ENCODE measurements at regions of chr21 and their contacts with region 1.

Region 1: DNA sequence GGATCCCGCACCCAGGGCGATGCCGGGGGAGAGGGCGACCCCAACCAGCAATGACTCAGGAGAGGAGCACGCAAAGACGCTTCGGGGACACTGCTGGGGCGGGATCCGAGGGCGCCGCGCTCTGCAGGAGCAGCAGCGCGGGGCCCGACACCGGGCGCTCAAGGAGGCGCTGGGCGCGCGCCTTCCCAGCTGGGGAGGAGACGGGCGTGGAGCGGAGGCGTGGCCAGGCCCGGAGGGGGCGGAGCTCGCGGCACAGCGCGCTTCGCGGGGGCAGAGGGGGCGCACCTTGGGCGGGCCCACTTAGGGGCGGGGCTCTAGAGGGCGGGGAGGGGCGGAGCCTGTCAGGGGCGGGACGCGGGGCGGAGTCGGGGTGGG is 369 bp downstream of the SUMO3 start:
- DNase-seq: peak; percentile 88
- ATAC-seq: peak; percentile 98
- H3K4me3 ChIP-seq: peak overlapping the region; percentile 99
- H3K27ac ChIP-seq: peak overlapping the region; percentile 75; the same call in 1 of the 2 replicates
- H3K4me1 ChIP-seq: peaks cover 8% of the 10 kb centered on the region; the same call in 1 of the 2 replicates
- H3K27me3 ChIP-seq: no peaks in the 10 kb centered on the region
- CTCF ChIP-seq: no peak
- POLR2A ChIP-seq: no peak
- RAD21 ChIP-seq: no peak

Region 2: DNA sequence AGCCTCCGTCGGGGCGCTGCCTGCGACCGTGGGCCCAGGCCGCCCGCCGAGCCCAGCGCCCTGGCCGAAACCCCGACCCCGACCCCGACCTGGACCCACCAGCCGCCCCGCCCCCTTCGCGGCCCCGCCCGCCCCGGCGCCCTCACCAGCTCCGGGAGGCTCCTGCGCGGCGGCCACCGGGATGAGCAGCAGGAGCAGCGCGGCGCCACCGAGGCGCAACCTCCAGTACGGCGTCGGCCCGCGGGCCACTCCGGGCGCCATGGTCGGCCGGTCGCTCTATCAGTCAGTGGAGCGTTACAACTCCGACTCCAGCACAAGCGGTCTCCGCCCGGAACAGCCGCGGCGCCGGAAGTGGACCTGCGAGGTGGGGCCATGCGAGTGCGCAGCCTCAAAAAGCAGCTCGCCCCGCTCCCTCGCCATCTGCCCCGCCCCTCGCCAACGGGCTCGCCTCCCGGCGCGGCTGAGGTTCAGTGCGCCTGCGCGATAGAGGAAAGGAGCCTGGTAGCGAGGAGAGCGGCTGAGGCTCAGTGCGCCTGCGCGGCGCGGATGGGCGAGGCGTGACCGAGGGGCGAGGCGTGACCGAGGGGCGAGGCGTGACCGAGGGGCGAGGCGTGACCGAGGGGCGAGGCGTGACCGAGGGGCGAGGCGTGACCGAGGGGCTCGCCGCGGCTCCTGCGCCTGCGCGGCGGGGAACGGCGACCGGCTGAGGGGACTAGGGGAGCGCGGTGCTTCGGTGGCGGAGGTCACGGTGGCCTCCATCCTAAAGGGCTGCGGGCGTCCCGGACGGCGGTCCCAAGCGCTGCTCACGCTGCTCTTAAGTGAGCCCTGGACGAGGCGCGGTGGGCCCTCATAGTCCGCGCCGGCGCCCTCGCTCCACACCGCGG is 56.1 kb after region 1 on chr21 and contains the start of gene PTTG1IP:
- CTCF ChIA-PET with region 1: no interaction called
- POLR2A ChIA-PET with region 1: no interaction called
- dilution Hi-C with region 1: no loop called
- in situ Hi-C with region 1: no loop called
- intact Hi-C with region 1: loop called (anchors 5 kb)
- DNase-seq: peak; percentile 94
- ATAC-seq: peak; percentile 81
- H3K4me3 ChIP-seq: peak within 1 kb of the TSS; percentile 90
- H3K27ac ChIP-seq: peak within 1 kb of the TSS; percentile 85
- H3K4me1 ChIP-seq: peaks cover 17% of the 10 kb centered on the region
- H3K27me3 ChIP-seq: no peaks in the 10 kb centered on the region
- CTCF ChIP-seq: no peak
- POLR2A ChIP-seq: peak; percentile 83
- RAD21 ChIP-seq: no peak
- total RNA-seq, gene PTTG1IP: 194 and 230 TPM in 2 replicates

Region 3: DNA sequence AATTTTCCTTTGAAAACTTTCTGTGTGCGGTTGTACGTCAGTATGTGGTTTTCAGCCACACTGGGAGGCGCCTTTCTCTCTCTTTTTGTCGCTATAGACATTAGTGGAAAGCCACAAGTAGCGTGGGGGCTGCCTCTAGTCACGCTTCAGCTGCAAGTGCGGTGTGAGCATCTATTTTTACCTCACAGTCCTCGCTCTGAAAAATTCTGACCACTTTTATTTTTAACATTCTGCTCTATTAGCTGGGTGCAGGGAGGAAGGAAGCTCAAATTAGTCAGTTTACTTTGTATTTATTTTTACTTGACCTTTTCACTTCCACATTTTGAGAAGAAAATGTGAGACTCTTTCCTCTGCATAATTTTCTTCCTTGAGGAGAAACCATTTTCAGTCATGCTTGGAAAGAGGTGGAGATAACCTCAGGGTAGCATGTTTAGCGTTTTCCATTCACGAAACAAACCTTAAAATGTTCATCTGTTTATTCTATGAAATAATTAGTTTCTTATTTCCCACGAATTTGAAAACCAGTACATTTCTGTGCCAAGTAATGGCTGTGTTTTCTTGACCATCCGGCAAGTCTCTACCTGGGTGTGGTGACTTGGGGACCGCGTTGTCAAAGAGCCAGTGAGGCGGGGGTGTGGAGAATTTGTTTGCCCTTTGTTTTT is 292.5 kb after region 1 on chr21:
- CTCF ChIA-PET with region 1: no interaction called
- POLR2A ChIA-PET with region 1: no interaction called
- dilution Hi-C with region 1: no loop called
- in situ Hi-C with region 1: loop called (anchors 25 kb)
- intact Hi-C with region 1: no loop called
- DNase-seq: no peak
- ATAC-seq: no peak
- H3K4me3 ChIP-seq: no peak overlapping the region
- H3K27ac ChIP-seq: no peak overlapping the region
- H3K4me1 ChIP-seq: peaks cover 20% of the 10 kb centered on the region
- H3K27me3 ChIP-seq: no peaks in the 10 kb centered on the region
- CTCF ChIP-seq: no peak
- POLR2A ChIP-seq: no peak
- RAD21 ChIP-seq: no peak

Region 4: DNA sequence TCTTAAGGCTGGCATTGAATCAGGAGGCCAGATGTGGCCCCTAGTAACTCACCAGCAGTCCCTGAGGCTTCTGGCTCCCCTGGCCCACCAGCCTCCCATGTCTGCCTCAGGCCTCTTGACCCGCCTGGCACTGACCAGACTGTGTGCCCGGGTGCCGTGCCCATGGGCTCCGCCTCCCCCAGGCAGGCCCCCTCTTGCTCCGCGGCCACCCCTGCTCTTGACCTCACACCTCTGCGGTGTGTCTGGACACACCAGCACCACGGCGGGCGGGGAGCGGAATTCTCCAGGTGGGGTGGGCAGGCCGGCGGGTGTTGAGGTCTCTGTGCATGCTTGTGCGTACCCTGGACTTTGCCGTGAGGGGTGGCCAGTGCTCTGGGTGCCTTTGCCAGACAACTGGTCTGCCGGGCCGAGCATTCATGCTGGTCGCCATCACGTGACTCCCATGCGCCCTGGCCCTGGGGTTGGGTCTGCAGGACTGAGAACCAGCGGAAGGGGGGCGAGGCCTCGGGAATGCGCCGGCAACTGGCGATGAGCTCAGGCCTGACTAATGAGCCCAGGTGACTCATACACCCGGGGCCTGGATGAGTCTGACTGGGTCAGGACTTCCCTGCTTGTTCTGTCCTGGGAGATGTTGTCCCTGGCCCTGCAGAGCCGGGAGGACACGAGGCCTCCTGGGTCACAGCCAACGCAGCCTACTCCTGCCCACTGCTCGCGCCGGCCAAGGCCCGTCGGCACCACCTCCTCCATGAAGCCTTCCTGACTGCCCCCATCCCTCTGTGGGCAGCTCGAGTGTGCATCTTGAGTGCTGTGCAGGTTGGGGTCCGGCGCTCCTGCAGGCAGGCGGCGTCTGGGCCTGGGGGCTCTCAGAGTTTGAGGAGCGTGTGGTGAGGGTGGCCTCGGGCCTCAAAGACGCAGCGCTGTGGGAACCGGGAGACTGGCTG is 610.1 kb after region 1 on chr21:
- CTCF ChIA-PET with region 1: interaction called, 10 read pairs
- POLR2A ChIA-PET with region 1: no interaction called
- dilution Hi-C with region 1: no loop called
- in situ Hi-C with region 1: no loop called
- intact Hi-C with region 1: no loop called
- DNase-seq: peak; percentile 98
- ATAC-seq: peak; percentile 96
- H3K4me3 ChIP-seq: no peak overlapping the region
- H3K27ac ChIP-seq: peak overlapping the region; percentile 58
- H3K4me1 ChIP-seq: peaks cover 32% of the 10 kb centered on the region
- H3K27me3 ChIP-seq: no peaks in the 10 kb centered on the region
- CTCF ChIP-seq: no peak
- POLR2A ChIP-seq: 0 out of 2 replicates have a peak, but pooled peaks have one; percentile 37
- RAD21 ChIP-seq: peak; percentile 34

Measured in IMR-90 (cell line).